ENCODE measurements at regions of chr17 and their contacts with region 1.

Region 1: DNA sequence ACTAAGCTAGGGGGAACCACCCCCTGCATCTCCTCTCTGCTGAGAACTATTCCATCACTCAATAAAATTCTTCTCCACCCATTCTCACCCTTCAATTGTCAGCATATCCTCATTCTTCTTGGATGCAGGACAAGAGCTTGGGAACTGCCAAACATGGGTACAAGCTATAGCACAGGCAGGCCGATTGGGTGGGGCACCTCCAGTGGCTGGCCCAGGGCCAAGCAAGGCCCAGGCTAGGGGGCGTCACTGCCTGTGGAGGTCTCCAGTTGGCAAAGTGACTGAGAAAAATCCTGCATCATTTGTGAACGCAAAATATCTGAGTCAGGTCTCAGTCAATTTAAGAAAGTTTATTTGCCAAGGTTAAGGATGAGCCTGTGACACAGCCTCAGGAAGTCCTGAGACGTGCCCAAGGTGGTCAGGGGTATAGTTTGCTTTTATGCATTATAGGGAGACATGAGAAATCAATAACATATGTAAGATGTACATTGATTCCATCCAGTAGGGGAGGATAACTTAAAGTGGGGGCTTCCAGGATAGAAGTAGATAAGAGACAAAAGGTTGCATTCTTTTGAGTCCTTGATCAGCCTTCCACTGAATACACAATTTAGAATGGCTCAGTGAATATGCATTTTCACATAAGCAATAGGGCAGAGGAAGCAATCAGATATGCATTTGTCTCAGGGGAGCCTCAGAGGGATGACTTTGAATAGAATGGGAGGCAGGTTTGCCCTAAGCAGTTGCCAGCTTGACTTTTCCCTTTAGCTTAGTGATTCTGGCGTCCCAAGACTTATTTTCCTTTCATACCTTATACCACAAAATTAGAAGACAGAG is 21.5 kb upstream of the DHRS7B start:
- DNase-seq: no peak
- H3K4me3 ChIP-seq: no peak overlapping the region
- H3K27me3 ChIP-seq: peaks cover 1% of the 10 kb centered on the region
- CTCF ChIP-seq: no peak

Region 2: DNA sequence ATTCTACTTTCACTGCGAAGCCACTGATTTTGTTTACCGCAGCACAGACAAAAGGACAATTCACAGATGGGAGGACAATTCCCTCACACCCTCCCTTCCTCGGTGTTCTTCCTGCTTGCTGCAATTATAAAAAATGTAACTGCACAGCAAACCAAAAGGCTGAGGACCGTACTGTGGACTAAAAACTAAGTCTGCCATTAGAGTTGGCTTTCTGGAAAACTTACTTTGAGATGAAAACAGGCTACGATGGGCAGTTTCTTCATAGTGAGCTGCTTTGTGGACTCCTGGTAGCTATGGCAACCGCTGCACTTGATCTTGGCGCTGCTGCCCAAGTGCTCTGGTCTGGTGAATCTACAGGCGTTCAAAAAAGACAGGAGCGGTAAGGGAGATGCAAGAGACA is 97.6 kb before region 1 on chr17:
- CTCF ChIA-PET with region 1: no interaction called
- POLR2A ChIA-PET with region 1: no interaction called
- DNase-seq: no peak
- H3K4me3 ChIP-seq: no peak overlapping the region
- H3K27me3 ChIP-seq: no peaks in the 10 kb centered on the region
- CTCF ChIP-seq: no peak

Region 3: DNA sequence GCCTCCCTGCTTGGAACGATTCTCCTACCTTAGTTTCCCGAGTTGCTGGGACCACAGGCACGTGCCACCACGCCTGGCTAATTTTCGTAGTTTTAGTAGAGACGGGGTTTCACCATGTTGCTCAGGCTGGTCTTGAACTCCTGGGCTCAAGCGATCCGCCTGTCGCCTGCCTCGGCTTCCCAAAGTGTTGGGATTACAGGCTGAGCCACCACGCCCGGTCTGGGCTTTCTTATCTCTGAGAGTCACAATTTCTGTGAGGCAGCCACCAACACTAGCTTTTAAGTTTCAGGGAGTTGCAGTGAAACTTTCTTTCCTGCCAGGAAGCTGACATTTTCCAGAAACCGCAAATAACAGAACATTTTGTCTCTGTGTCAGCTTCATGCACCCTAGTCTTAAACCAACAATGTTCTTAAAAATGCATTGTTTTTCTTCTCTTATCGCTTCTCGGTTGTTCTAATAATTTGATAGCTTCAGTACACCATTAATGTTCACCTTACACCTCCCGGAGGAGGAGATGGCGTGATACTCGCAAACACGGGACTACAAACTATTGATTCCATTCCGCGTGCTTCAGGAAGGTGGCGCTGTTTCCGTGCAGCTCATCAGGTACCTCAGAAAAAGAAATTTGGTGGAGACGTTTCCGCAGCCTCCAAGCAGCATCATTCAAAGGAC is 14.1 kb after region 1 on chr17:
- CTCF ChIA-PET with region 1: interaction called, 32 read pairs
- POLR2A ChIA-PET with region 1: no interaction called
- DNase-seq: no peak
- H3K4me3 ChIP-seq: no peak overlapping the region
- H3K27me3 ChIP-seq: peaks cover 9% of the 10 kb centered on the region
- CTCF ChIP-seq: peak; percentile 92

Region 4: GRCh38 chr17:21194703-21195102 is 89.4 kb after region 1 on chr17:
- CTCF ChIA-PET with region 1: no interaction called
- POLR2A ChIA-PET with region 1: no interaction called
- DNase-seq: no peak
- H3K4me3 ChIP-seq: no peak overlapping the region
- H3K27me3 ChIP-seq: no peaks in the 10 kb centered on the region
- CTCF ChIP-seq: no peak